ENCODE measurements at regions of chr4 and their contacts with region 1.

Region 1: DNA sequence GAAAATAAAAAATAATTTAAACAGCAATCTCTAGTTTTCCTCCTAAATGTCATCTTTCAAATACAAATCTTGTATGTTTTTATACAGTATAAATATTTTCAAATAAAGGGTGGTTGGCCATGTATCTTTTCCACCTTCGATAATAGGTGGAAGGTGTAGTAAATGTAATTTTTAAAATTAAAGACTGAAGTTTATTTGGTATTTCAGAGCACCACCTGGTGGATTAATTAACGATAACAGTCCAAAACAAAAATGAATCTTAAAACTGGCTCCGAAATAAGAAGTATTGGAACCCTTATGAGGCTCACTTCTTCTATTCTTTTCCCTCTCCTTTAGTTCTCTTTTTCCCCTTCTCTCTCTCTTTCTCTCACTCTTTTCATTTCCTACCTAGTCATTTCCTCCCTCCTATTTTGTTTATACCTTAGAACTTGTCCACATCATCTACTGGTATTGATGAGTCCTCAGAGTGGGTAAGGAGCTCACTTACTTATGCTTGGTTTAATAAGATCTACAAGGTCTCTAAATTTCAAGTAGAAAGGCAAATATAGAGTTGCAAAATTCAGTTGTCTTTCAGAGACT is 82.9 kb upstream of the EXOC1L start:
- DNase-seq: peak; percentile 23
- H3K4me3 ChIP-seq: no peak overlapping the region
- H3K27ac ChIP-seq: no peak overlapping the region
- H3K4me1 ChIP-seq: no peaks in the 10 kb centered on the region
- H3K27me3 ChIP-seq: peaks cover 0 to 2% of the 10 kb centered on the region in 2 experiments
- CTCF ChIP-seq: peak; percentile 7 to 11
- POLR2A ChIP-seq: no peak

Region 2: DNA sequence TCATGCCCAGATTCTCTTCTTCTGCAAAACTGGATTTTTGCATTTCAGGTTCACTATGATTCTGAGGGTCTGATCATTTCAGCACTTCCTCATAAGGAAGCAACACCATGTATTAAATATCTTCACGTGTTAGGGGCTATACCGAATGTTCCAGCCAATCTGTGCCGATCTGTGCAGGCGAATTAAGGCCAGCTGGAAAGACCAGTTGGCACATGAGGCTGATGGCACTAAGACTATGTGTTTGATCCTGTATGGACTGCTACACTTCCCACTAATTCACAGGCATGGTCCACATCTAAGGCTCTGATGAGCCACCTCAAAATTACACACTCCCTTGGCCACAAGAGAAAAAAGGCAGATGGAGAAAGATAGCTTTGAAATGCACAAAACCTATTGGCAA is 640.1 kb before region 1 on chr4:
- CTCF ChIA-PET with region 1: no interaction called
- POLR2A ChIA-PET with region 1: no interaction called
- dilution Hi-C with region 1: no loop called
- intact Hi-C with region 1: loop called (anchors 5 kb)
- DNase-seq: no peak
- H3K4me3 ChIP-seq: no peak overlapping the region
- H3K27ac ChIP-seq: no peak overlapping the region
- H3K4me1 ChIP-seq: peaks cover 8% of the 10 kb centered on the region
- H3K27me3 ChIP-seq: no peaks in the 10 kb centered on the region
- CTCF ChIP-seq: no peak
- POLR2A ChIP-seq: no peak

Region 3: GRCh38 chr4:55116450-55116849 is 620.2 kb before region 1 on chr4:
- CTCF ChIA-PET with region 1: no interaction called
- POLR2A ChIA-PET with region 1: no interaction called
- dilution Hi-C with region 1: no loop called
- intact Hi-C with region 1: loop called (anchors 5 kb)
- DNase-seq: peak; percentile 66
- H3K4me3 ChIP-seq: no peak overlapping the region
- H3K27ac ChIP-seq: no peak overlapping the region
- H3K4me1 ChIP-seq: peaks cover 60% of the 10 kb centered on the region
- H3K27me3 ChIP-seq: no peaks in the 10 kb centered on the region
- CTCF ChIP-seq: no peak
- POLR2A ChIP-seq: no peak

Region 4: GRCh38 chr4:55444827-55445226 is 291.9 kb before region 1 on chr4:
- CTCF ChIA-PET with region 1: interaction called, 3 read pairs
- POLR2A ChIA-PET with region 1: no interaction called
- dilution Hi-C with region 1: no loop called
- intact Hi-C with region 1: loop called (anchors 5 kb)
- DNase-seq: peak; percentile 31
- H3K4me3 ChIP-seq: no peak overlapping the region
- H3K27ac ChIP-seq: no peak overlapping the region
- H3K4me1 ChIP-seq: peaks cover 3% of the 10 kb centered on the region
- H3K27me3 ChIP-seq: no peaks in the 10 kb centered on the region
- CTCF ChIP-seq: peak in 1 of 2 donors; percentile 20
- POLR2A ChIP-seq: no peak

Region 5: GRCh38 chr4:56375458-56375857 is 638.8 kb after region 1 on chr4:
- CTCF ChIA-PET with region 1: no interaction called
- POLR2A ChIA-PET with region 1: no interaction called
- dilution Hi-C with region 1: no loop called
- intact Hi-C with region 1: no loop called
- DNase-seq: no peak
- H3K4me3 ChIP-seq: no peak overlapping the region
- H3K27ac ChIP-seq: no peak overlapping the region
- H3K4me1 ChIP-seq: peaks cover 3% of the 10 kb centered on the region
- H3K27me3 ChIP-seq: no peaks in the 10 kb centered on the region
- CTCF ChIP-seq: no peak
- POLR2A ChIP-seq: no peak

Measured in endothelial cell of umbilical vein (primary cell).